Natural killer cell (primary cell): ENCODE measurements at regions of chr7 and their contacts with region 1.

Region 1: GRCh38 chr7:64665980-64666662 is at the start of gene ZNF107:
- DNase-seq: peak; percentile 81 to 92
- ATAC-seq: peak; percentile 97 to 100 (median 98)
- H3K4me3 ChIP-seq: peak within 1 kb of the TSS; percentile 95
- H3K4me3 Mint-ChIP-seq: peak within 1 kb of the TSS; percentile 97
- H3K27ac ChIP-seq: peak within 1 kb of the TSS; percentile 93
- H3K27ac Mint-ChIP-seq: peak within 1 kb of the TSS; percentile 90 to 93
- H3K4me1 ChIP-seq: peaks cover 13% of the 10 kb centered on the region
- H3K4me1 Mint-ChIP-seq: peaks cover 30 to 44% of the 10 kb centered on the region in 2 donors
- H3K27me3 ChIP-seq: no peaks in the 10 kb centered on the region
- H3K27me3 Mint-ChIP-seq: no peaks in the 10 kb centered on the region
- CTCF ChIP-seq: no peak
- total RNA-seq, gene ZNF107: 10.3 to 13.3 (median 10.4) TPM

Region 2: GRCh38 chr7:64307254-64308015 is 358.7 kb before region 1 on chr7:
- intact Hi-C with region 1: loop called (anchors 1 kb)
- DNase-seq: peak; percentile 82 to 96
- ATAC-seq: peak; percentile 96 to 100 (median 98)
- H3K4me3 ChIP-seq: peak overlapping the region; percentile 68
- H3K4me3 Mint-ChIP-seq: peak overlapping the region; percentile 100
- H3K27ac ChIP-seq: peak overlapping the region; percentile 85
- H3K27ac Mint-ChIP-seq: peak overlapping the region; percentile 96 to 97
- H3K4me1 ChIP-seq: peaks cover 21% of the 10 kb centered on the region
- H3K4me1 Mint-ChIP-seq: peaks cover 15 to 21% of the 10 kb centered on the region in 2 donors
- H3K27me3 ChIP-seq: no peaks in the 10 kb centered on the region
- H3K27me3 Mint-ChIP-seq: no peaks in the 10 kb centered on the region
- CTCF ChIP-seq: peak; percentile 19